Activated CD8-positive, alpha-beta T cell treated with anti-CD3 and anti-CD28 coated beads for 36 hours (primary cell): ENCODE measurements at regions of chr5 and their contacts with region 1.

Region 1: DNA sequence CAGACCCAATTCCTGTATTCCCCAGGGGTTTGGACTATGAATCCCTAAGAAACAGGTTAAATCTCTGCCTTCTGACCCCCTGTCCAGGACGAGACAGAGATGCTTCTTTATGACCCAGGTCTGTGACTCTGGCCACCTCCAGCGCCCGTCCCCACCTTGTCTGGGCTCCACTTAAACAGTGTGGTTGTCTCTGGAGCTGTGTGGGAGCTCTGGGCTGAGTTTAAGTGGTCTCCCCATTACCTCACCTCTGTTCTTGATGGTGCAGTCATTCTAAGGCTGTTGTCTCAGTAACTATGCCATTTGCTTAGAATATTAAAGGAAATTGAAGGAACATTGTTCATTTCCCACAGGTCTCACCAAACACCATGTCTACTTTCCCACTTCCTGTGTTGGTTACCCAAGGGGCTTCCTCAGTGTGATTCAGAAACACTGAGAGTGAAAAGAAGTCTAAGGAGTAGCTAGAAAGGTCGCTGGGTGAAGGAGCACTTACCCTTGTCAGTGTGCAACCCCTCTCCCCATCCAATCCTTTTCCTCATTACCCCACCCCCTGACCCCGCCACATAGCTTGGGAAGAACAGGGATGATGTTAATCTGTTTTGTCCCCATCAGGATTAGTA is 127.8 kb upstream of the CKMT2 start:
- DNase-seq: no peak
- ATAC-seq: peak; percentile 40
- H3K4me3 Mint-ChIP-seq: no peak overlapping the region
- H3K27ac Mint-ChIP-seq: peak overlapping the region; percentile 20
- H3K4me1 Mint-ChIP-seq: peaks cover 29% of the 10 kb centered on the region
- H3K27me3 Mint-ChIP-seq: no peaks in the 10 kb centered on the region
- CTCF ChIP-seq: no peak

Region 2: DNA sequence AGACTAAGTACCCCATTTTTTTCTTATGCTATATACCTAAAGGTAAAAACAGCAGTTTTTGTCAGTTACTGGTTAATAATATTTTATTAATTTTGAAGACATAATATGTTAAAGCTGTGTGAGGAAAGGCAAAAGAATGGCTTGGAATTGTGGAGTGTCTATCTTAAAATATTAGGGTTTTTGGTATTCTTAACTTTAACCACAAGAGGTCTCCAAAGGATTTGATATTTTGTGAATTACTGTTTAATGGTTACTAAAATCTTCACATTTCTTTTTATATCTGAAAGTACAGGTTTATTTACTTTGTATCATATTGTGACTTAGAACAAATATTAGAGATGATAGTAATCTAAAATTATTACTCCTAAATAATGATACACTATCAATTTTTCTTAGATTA is 418.6 kb before region 1 on chr5:
- CTCF ChIA-PET with region 1: interaction called, 22 read pairs
- POLR2A ChIA-PET with region 1: no interaction called
- intact Hi-C with region 1: loop called (anchors 5 kb)
- DNase-seq: no peak
- ATAC-seq: no peak
- H3K4me3 Mint-ChIP-seq: no peak overlapping the region
- H3K27ac Mint-ChIP-seq: no peak overlapping the region
- H3K4me1 Mint-ChIP-seq: peaks cover 19% of the 10 kb centered on the region
- H3K27me3 Mint-ChIP-seq: no peaks in the 10 kb centered on the region
- CTCF ChIP-seq: peak; percentile 25

Region 3: GRCh38 chr5:80960531-80961375 is 144.6 kb before region 1 on chr5:
- CTCF ChIA-PET with region 1: interaction called, 17 read pairs
- POLR2A ChIA-PET with region 1: no interaction called
- intact Hi-C with region 1: loop called (anchors 5 kb)
- DNase-seq: peak; percentile 68
- ATAC-seq: peak; percentile 47
- H3K4me3 Mint-ChIP-seq: peak overlapping the region; percentile 92
- H3K27ac Mint-ChIP-seq: peak overlapping the region; percentile 87
- H3K4me1 Mint-ChIP-seq: peaks cover 58% of the 10 kb centered on the region
- H3K27me3 Mint-ChIP-seq: no peaks in the 10 kb centered on the region
- CTCF ChIP-seq: no peak

Region 4: DNA sequence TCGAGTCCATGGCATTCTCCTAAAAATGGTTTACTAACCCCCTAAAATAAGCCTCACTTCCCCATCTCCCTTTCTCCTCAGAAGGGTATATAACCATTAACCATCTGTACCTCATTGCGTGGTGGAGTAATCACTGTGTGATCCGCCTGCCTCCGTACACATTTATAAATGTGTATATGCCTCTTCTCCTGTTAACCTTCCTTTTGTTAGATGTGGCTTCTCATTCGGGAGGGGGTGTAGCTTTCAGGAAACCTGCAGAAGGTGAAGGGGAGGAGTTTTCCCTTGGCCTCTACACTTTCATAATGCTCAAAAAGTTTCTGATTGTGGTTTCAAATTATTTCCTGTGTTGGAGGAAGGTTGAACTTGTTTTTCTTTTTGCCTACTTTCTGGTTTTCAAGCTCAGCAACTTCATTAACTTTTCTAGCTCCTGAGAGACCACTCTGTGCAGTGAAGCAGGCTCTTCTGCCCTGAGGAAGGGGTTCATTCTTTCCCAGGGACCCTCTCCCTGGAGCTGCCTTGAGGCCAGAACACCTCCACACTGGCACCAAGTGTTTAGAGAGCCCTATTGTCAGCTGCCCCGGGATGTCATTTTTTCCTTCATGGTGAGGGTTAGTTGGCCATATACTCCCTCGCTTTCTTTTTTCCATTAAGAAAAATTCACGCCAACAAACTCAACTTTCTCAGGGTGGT is 98.3 kb before region 1 on chr5:
- CTCF ChIA-PET with region 1: interaction called, 11 read pairs
- POLR2A ChIA-PET with region 1: no interaction called
- intact Hi-C with region 1: no loop called
- DNase-seq: peak; percentile 74
- ATAC-seq: peak; percentile 83
- H3K4me3 Mint-ChIP-seq: peak overlapping the region; percentile 80
- H3K27ac Mint-ChIP-seq: peak overlapping the region; percentile 98
- H3K4me1 Mint-ChIP-seq: peaks cover 75% of the 10 kb centered on the region
- H3K27me3 Mint-ChIP-seq: no peaks in the 10 kb centered on the region
- CTCF ChIP-seq: no peak

Region 5: GRCh38 chr5:81035522-81035921 is 69.8 kb before region 1 on chr5:
- CTCF ChIA-PET with region 1: no interaction called
- POLR2A ChIA-PET with region 1: no interaction called
- intact Hi-C with region 1: no loop called
- DNase-seq: no peak
- ATAC-seq: no peak
- H3K4me3 Mint-ChIP-seq: no peak overlapping the region
- H3K27ac Mint-ChIP-seq: no peak overlapping the region
- H3K4me1 Mint-ChIP-seq: peaks cover 10% of the 10 kb centered on the region
- H3K27me3 Mint-ChIP-seq: no peaks in the 10 kb centered on the region
- CTCF ChIP-seq: no peak

Region 6: GRCh38 chr5:81125959-81126358 is 20.6 kb after region 1 on chr5:
- CTCF ChIA-PET with region 1: interaction called, 14 read pairs
- POLR2A ChIA-PET with region 1: no interaction called
- intact Hi-C with region 1: no loop called
- DNase-seq: no peak
- ATAC-seq: no peak
- H3K4me3 Mint-ChIP-seq: no peak overlapping the region
- H3K27ac Mint-ChIP-seq: no peak overlapping the region
- H3K4me1 Mint-ChIP-seq: peaks cover 21% of the 10 kb centered on the region
- H3K27me3 Mint-ChIP-seq: no peaks in the 10 kb centered on the region
- CTCF ChIP-seq: no peak